ENCODE measurements at regions of chr3 and their contacts with region 1.

Region 1: DNA sequence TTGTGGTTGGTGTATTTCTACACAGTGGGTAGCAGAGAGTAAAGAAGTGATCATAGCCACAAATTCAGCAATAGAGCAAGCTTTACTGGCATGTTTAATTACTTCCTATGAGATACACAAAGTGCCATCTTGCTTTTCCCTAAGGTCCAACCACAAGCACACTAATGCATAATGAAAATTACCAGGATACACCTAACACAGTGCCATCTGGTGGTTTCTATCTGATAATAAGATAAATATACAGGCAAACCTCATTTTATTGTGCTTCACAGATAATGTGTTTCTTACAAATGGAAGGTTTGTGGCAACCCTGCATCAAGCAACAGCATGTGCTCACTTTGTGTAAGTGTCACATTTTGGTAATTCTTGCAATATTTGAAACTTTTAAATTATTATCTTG is 223.0 kb downstream of the NSUN3 start:
- DNase-seq: no peak
- H3K4me3 Mint-ChIP-seq: no peak overlapping the region
- H3K27ac Mint-ChIP-seq: no peak overlapping the region
- H3K4me1 Mint-ChIP-seq: no peaks in the 10 kb centered on the region
- H3K27me3 Mint-ChIP-seq: no peaks in the 10 kb centered on the region
- CTCF ChIP-seq: no peak

Region 2: DNA sequence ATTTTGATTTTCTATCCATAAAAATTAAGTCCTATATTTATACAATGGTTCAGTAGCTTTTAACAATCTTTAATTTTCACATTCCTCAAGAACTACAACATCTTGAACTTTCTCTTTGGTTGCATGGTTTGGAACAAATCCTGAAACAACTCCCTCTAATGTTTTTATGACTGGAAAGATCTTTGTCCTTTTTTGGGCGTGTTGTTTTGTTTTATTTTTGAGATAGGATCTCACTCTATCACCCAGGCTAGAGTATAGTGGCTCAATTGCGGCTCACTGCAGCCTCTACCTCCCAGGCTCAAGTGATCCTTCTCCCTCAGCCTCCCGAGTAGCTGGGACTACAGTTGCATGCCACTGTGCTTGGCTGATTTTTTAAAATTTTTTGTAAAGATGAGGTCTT is 261.5 kb before region 1 on chr3:
- CTCF ChIA-PET with region 1: no interaction called
- intact Hi-C with region 1: no loop called
- DNase-seq: no peak
- H3K4me3 Mint-ChIP-seq: peak overlapping the region; percentile 41
- H3K27ac Mint-ChIP-seq: peak overlapping the region; percentile 64
- H3K4me1 Mint-ChIP-seq: no peaks in the 10 kb centered on the region
- H3K27me3 Mint-ChIP-seq: no peaks in the 10 kb centered on the region
- CTCF ChIP-seq: no peak

Region 3: GRCh38 chr3:94115482-94115881 is 170.4 kb before region 1 on chr3:
- CTCF ChIA-PET with region 1: no interaction called
- intact Hi-C with region 1: loop called (anchors 5 kb)
- DNase-seq: no peak
- H3K4me3 Mint-ChIP-seq: no peak overlapping the region
- H3K27ac Mint-ChIP-seq: no peak overlapping the region
- H3K4me1 Mint-ChIP-seq: no peaks in the 10 kb centered on the region
- H3K27me3 Mint-ChIP-seq: no peaks in the 10 kb centered on the region
- CTCF ChIP-seq: no peak

Region 4: DNA sequence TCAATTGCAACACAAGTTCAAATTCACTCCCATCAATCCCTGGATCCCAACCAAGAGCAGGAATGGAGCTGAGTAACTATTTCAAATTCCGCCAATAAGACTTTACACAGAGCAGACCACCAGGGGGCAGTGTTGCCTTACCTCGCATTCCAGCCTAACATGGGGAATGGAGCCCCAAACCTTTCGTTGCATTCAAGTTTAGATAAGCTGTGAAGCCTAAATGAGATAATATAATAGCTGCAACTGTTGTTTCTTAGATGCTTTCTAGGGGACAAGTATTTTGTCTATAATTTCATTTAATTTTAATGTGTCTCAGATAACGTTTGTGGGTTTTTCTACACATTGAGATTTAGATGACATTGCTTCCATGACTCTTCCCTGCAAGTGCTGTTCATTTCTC is 36.3 kb before region 1 on chr3:
- CTCF ChIA-PET with region 1: no interaction called
- intact Hi-C with region 1: loop called (anchors 2 kb)
- DNase-seq: peak; percentile 78
- H3K4me3 Mint-ChIP-seq: no peak overlapping the region
- H3K27ac Mint-ChIP-seq: no peak overlapping the region
- H3K4me1 Mint-ChIP-seq: no peaks in the 10 kb centered on the region
- H3K27me3 Mint-ChIP-seq: no peaks in the 10 kb centered on the region
- CTCF ChIP-seq: peak; percentile 64

Measured in Calu3 (cell line).